ENCODE measurements at regions of chr6 and their contacts with region 1.

Region 1: DNA sequence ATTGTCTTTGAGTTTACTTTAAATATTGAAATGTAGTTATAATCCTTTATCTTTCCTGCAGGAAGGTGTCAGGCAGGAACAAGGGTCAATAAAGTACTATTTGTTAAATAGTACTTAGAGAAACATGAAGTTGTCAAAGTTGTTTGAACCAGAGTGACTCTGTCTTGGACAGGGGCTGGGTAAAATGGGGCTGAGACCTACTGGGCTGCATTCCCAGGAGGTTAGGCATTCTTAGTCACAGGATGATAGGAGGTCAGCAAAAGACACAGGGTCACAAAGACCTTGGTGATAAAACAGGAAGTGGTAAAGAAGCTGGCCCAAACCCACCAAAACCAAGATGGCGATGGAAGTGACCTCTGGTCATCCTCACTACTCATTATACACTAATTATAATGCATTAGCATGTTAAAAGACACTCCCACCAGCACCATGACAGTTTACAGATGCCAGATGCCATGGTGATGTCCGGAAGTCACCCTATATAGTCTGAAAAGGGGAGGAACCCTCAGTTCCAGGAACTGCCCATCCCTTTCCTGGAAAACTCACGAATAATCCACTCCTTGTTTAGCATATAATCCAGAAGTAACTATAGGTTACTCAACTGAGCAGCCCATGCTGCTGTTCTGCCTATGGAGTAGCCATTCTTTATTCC is 19.7 kb downstream of the SLC22A2 start:
- DNase-seq: no peak
- ATAC-seq: no peak
- H3K4me3 ChIP-seq: no peak overlapping the region
- H3K27ac ChIP-seq: no peak overlapping the region
- H3K4me1 ChIP-seq: no peaks in the 10 kb centered on the region
- H3K27me3 ChIP-seq: no peaks in the 10 kb centered on the region

Region 2: GRCh38 chr6:160137989-160138835 is 100.7 kb before region 1 on chr6:
- intact Hi-C with region 1: loop called (anchors 5 kb)
- DNase-seq: no peak
- ATAC-seq: peak; percentile 27
- H3K4me3 ChIP-seq: no peak overlapping the region
- H3K27ac ChIP-seq: peak overlapping the region in 1 of 2 donors; percentile 84
- H3K4me1 ChIP-seq: peaks cover 0 to 6% of the 10 kb centered on the region in 2 donors
- H3K27me3 ChIP-seq: no peaks in the 10 kb centered on the region